Activated naive CD4-positive, alpha-beta T cell treated with anti-CD3 and anti-CD28 coated beads for 36 hours (primary cell): ENCODE measurements at regions of chr12 and their contacts with region 1.

Region 1: GRCh38 chr12:48814262-48815125 is 3.8 kb upstream of the CACNB3 start:
- DNase-seq: peak; percentile 83
- H3K4me3 Mint-ChIP-seq: peak overlapping the region; percentile 93
- H3K27ac Mint-ChIP-seq: no peak overlapping the region
- H3K4me1 Mint-ChIP-seq: peaks cover 26% of the 10 kb centered on the region
- H3K27me3 Mint-ChIP-seq: peaks cover 15% of the 10 kb centered on the region

Region 2: GRCh38 chr12:48681738-48682532 is 132.6 kb before region 1 on chr12 and contains the start of gene KANSL2:
- CTCF ChIA-PET with region 1: interaction called, 5 read pairs
- intact Hi-C with region 1: loop called (anchors 2 kb)
- DNase-seq: peak; percentile 99
- H3K4me3 Mint-ChIP-seq: peak within 1 kb of the TSS; percentile 98
- H3K27ac Mint-ChIP-seq: peak within 1 kb of the TSS; percentile 93
- H3K4me1 Mint-ChIP-seq: peaks cover 49% of the 10 kb centered on the region
- H3K27me3 Mint-ChIP-seq: no peaks in the 10 kb centered on the region
- total RNA-seq, gene KANSL2: 37.9 to 39.1 TPM

Region 3: GRCh38 chr12:48795480-48796455 is 18.7 kb before region 1 on chr12:
- CTCF ChIA-PET with region 1: interaction called, 14 read pairs
- intact Hi-C with region 1: no loop called
- DNase-seq: peak; percentile 74
- H3K4me3 Mint-ChIP-seq: no peak overlapping the region
- H3K27ac Mint-ChIP-seq: no peak overlapping the region
- H3K4me1 Mint-ChIP-seq: no peaks in the 10 kb centered on the region
- H3K27me3 Mint-ChIP-seq: peaks cover 8% of the 10 kb centered on the region

Region 4: GRCh38 chr12:48832321-48833060 is 18.0 kb after region 1 on chr12:
- CTCF ChIA-PET with region 1: interaction called, 22 read pairs
- intact Hi-C with region 1: no loop called
- DNase-seq: no peak
- H3K4me3 Mint-ChIP-seq: no peak overlapping the region
- H3K27ac Mint-ChIP-seq: no peak overlapping the region
- H3K4me1 Mint-ChIP-seq: no peaks in the 10 kb centered on the region
- H3K27me3 Mint-ChIP-seq: no peaks in the 10 kb centered on the region

Region 5: GRCh38 chr12:48936379-48936979 is 122.0 kb after region 1 on chr12:
- CTCF ChIA-PET with region 1: interaction called, 5 read pairs
- intact Hi-C with region 1: loop called (anchors 1 kb)
- DNase-seq: peak; percentile 90
- H3K4me3 Mint-ChIP-seq: no peak overlapping the region
- H3K27ac Mint-ChIP-seq: peak overlapping the region; percentile 47
- H3K4me1 Mint-ChIP-seq: peaks cover 10% of the 10 kb centered on the region
- H3K27me3 Mint-ChIP-seq: no peaks in the 10 kb centered on the region

Region 6: DNA sequence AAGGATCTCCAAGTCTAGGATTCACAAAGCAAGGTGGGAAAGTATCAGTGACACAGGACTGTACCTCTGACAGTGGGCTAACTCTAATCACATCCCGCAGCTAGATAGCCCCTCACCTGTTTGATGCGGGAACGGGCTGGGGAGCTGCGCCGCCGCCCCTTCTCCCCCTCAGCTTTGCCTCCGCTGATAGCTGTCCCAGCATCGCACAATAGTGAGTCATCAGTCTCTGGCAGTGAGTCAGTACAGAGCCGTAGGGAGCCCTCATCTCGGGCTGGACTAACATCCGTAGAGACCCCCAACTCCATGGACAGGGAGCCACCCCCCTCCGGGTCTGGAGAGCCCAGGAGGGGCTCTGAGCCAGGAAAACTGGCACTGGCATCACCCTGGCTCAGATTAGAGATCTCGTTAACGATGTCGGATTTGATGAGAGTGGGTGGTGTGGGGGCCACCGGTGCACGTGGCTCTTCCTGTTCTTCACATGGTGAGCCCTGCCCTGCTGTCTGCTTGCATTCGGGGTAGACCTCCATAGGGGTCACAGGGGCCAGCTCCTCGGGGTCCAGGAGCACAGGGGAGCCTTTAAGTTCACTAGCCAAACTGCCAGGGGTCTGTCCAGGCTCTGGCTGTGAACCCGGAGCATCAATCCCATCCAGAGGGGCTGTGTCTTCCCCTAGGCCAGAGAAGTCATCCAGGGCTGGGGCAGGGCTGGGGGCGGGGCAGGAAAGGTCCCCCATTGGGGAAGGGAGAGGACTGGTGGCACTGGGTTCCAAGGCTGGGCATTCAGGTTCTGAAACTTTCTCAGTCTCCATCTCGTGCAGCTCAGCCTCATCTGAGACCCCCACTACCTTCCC is 235.3 kb after region 1 on chr12:
- CTCF ChIA-PET with region 1: no interaction called
- intact Hi-C with region 1: no loop called
- DNase-seq: no peak
- H3K4me3 Mint-ChIP-seq: no peak overlapping the region
- H3K27ac Mint-ChIP-seq: no peak overlapping the region
- H3K4me1 Mint-ChIP-seq: peaks cover 3% of the 10 kb centered on the region
- H3K27me3 Mint-ChIP-seq: no peaks in the 10 kb centered on the region